ENCODE measurements at regions of chr10 and their contacts with region 1.

Region 1: GRCh38 chr10:133309111-133309719 is 501 bp downstream of the ZNF511 start:
- DNase-seq: peak; percentile 97
- H3K4me3 Mint-ChIP-seq: peak overlapping the region; percentile 73
- H3K27ac Mint-ChIP-seq: peak overlapping the region; percentile 81
- H3K4me1 Mint-ChIP-seq: peaks cover 17% of the 10 kb centered on the region
- H3K27me3 Mint-ChIP-seq: peaks cover 2% of the 10 kb centered on the region

Region 2: GRCh38 chr10:132939957-132940790 is 369.0 kb before region 1 on chr10:
- intact Hi-C with region 1: loop called (anchors 5 kb)
- DNase-seq: peak; percentile 83
- H3K4me3 Mint-ChIP-seq: no peak overlapping the region
- H3K27ac Mint-ChIP-seq: no peak overlapping the region
- H3K4me1 Mint-ChIP-seq: peaks cover 2% of the 10 kb centered on the region
- H3K27me3 Mint-ChIP-seq: peaks cover 30% of the 10 kb centered on the region

Region 3: DNA sequence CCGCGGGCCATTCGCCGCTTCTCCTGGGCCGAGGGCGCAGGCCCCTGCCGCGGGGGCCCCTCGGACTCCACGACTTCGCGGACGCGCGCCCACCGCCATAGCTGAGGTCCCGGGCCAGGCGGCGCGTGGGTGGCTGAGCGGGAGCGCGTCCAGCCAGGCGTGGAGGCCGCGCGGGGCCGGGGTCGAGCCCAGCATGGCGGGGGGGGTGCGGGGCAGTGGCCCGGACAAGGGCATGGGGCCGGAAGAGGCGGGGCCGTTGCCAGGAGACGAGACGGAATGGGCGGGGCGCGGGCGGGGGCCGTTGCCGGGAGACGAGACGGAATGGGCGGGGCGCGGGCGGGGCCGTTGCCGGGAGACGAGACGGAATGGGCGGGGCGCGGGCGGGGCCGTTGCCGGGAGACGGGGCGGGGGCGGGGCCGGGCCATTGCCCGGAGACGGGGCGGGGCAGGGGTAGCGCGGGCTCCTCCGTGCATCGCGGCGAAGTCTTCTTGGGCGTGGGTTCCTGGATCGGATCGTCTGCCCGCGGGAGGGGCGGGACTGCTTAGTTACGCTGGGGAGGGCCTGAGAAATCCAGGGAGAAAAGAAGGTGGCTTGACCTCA is 47.4 kb before region 1 on chr10:
- intact Hi-C with region 1: loop called (anchors 1 kb)
- DNase-seq: peak; percentile 95
- H3K4me3 Mint-ChIP-seq: peak overlapping the region; percentile 85
- H3K27ac Mint-ChIP-seq: peak overlapping the region; percentile 48
- H3K4me1 Mint-ChIP-seq: peaks cover 61% of the 10 kb centered on the region
- H3K27me3 Mint-ChIP-seq: peaks cover 3% of the 10 kb centered on the region

Region 4: GRCh38 chr10:133278577-133279265 is 30.5 kb before region 1 on chr10:
- intact Hi-C with region 1: loop called (anchors 1 kb)
- DNase-seq: peak; percentile 87
- H3K4me3 Mint-ChIP-seq: peak overlapping the region; percentile 79
- H3K27ac Mint-ChIP-seq: peak overlapping the region; percentile 88
- H3K4me1 Mint-ChIP-seq: peaks cover 28% of the 10 kb centered on the region
- H3K27me3 Mint-ChIP-seq: no peaks in the 10 kb centered on the region

Region 5: DNA sequence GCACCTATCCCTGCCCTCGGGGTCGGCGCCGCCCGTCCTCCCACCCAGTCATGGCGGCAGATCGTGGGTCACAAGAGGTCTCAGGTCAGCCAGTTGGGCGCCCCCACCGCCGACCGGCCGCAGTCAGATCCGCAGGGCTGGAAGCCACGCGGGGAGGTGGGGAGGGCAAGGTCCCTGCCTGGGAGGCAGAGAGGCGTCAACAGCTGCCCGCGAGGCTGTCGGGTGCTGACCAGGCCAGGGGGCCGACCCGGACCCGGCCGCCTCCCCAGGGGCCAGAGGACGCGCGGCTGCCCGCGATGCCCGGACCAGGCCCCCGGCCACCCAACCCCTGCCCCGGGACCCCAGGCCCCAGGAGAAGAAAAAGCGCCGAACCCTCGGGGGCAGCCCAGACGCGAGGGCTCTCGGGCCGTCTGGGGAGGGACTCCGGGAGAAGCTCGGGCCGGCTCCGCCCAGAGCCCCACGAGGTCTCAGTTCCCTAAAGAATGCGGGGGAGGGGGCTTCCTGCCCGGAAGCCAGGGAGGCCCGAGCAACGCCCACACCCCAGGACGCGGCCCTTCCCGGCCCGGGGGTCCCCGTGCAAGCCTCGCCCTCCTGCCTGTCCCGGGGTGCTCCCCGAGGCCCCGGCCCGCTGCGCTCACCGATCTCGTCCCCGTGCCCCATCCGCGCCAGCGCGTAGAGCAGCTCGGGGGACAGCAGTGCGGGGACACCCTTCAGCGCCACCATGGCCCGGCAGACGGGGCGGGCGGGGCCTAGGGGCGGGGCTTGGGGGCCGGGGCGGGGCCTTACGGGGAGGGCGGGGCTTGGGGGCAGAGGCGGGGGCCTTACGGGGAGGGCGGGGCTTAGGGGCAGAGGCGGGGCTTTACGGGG is 48.3 kb after region 1 on chr10 and contains the start of gene FUOM:
- intact Hi-C with region 1: loop called (anchors 1 kb)
- DNase-seq: peak; percentile 91
- H3K4me3 Mint-ChIP-seq: peak within 1 kb of the TSS; percentile 85
- H3K27ac Mint-ChIP-seq: peak within 1 kb of the TSS; percentile 74
- H3K4me1 Mint-ChIP-seq: peaks cover 2% of the 10 kb centered on the region
- H3K27me3 Mint-ChIP-seq: no peaks in the 10 kb centered on the region
- total RNA-seq, gene FUOM: 43.6 and 46.6 TPM in 2 replicates

Region 6: DNA sequence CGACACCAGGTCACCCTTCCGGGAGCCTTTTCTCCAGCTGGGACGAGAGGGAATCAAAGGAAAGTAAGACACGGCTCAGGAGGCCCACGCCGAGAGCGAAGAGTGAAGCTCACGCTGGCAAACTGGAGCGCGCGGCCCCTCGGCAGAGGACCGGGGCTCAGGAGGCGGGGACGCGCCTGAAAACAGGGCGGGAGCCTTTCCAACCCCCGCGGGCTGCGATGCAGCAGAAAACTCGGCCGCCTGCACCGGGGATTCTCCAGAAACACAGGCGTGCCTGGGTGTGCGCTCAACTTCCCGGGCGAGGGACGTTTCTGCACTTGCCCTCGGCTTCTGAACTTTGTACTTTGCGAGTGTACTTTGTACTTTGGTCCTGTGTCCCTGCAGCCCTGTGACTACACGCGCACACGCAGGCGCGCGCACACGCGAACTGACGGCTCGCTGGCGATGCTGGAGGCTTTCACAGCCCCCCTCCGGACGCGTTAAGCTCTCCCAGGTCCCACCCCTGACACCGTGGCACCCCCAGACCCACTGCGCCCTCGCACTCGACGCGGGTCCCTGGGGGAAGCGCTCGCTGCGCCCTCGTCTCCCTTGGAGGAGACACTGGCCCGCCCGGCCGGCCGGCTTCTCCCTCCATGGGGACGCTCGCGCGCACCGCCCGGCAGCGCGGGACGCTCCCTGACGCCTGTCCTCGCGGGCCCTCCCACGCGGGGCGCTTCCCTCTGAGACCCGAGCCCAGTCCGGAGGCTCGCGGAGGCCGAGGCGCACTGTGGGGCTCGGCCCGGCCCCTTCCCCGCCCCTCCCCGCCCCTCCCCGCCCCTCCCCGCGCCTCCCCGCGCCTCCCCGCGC is 69.3 kb after region 1 on chr10:
- intact Hi-C with region 1: loop called (anchors 1 kb)
- DNase-seq: peak; percentile 90
- H3K4me3 Mint-ChIP-seq: peak overlapping the region; percentile 80
- H3K27ac Mint-ChIP-seq: peak overlapping the region; percentile 51
- H3K4me1 Mint-ChIP-seq: peaks cover 7% of the 10 kb centered on the region
- H3K27me3 Mint-ChIP-seq: peaks cover 3% of the 10 kb centered on the region

Region 7: DNA sequence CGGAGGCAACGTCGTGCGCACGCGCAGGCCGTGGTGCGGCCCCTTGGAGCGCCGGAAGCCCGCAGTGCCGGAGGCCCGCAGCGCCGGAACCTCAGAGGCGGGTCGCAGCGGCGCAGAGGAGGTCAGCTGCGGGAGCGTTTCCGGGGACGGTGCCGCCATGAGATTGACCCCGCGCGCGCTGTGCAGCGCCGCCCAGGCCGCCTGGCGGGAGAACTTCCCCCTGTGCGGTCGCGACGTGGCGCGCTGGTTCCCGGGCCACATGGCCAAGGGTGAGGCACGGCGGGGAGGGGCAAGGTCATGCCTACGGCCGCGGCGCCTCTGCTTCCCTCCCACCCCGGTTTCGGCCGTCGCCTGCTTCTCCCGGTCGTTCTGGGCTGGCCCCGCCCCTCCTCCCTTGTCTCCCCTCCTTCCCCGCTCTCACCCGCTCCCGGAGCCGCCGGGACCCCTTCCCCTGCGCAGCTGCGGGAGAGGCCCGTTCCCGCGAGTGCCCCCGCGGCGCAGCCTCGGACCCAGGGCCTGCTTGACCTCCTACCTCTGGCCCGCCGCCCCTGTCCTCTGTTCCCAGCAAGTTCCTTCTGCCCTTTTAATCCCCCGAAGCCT is 84.9 kb after region 1 on chr10 and contains the start of gene MTG1:
- intact Hi-C with region 1: loop called (anchors 5 kb)
- DNase-seq: peak; percentile 99
- H3K4me3 Mint-ChIP-seq: peak within 1 kb of the TSS; percentile 97
- H3K27ac Mint-ChIP-seq: peak within 1 kb of the TSS; percentile 98
- H3K4me1 Mint-ChIP-seq: peaks cover 37% of the 10 kb centered on the region
- H3K27me3 Mint-ChIP-seq: no peaks in the 10 kb centered on the region
- total RNA-seq, gene MTG1: 66.8 and 68.1 TPM in 2 replicates

Region 8: DNA sequence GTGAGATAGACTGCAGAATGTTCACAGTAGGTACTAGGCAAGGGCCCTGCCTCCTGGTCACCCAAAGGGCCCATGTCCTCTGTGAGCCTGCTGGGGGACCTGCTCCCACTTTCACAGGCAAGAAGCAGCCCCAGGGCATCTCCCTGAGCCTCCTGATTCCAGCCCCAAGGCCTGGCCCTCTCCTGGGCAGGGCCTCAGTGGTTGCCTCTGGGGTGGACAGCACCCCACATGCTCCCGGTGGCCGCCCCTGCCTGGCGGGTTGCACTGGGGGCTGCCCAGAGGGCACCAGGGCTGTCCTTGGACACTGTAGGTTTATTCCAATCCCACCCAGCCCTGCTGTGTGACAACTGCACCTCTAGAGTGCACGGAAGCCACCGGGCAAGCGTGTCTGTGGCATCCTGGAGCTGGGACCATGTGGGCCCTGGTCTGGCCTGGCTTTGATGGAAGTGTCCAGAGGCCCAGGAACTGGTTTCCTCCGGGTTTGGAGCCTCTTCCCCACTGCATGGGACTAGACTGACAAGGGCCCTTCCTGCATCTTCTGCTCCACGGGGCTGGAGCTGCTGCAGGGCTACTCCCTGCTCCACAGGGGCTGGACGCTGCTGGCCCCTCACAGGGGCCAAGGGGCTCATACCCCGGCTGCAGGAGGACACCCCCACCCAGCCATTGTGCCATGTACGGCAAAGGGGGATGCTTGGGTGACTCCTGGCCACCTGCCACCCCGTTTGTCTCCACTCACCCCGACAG is 281.2 kb after region 1 on chr10:
- intact Hi-C with region 1: no loop called
- DNase-seq: no peak
- H3K4me3 Mint-ChIP-seq: no peak overlapping the region
- H3K27ac Mint-ChIP-seq: no peak overlapping the region
- H3K4me1 Mint-ChIP-seq: no peaks in the 10 kb centered on the region
- H3K27me3 Mint-ChIP-seq: peaks cover 14% of the 10 kb centered on the region